Esophagus muscularis mucosa (tissue), 4 donors: ENCODE measurements at regions of chr1 and their contacts with region 1.

Region 1: GRCh38 chr1:17125756-17126237 is 6.5 kb upstream of the PADI2 start:
- DNase-seq: peak; percentile 95
- H3K4me3 ChIP-seq: peak overlapping the region in 1 of 4 donors; percentile 31
- H3K27ac ChIP-seq: no peak overlapping the region
- H3K4me1 ChIP-seq: peaks cover 9 to 15% (median 13%) of the 10 kb centered on the region in 4 donors
- H3K27me3 ChIP-seq: peaks cover 0 to 16% (median 0%) of the 10 kb centered on the region in 4 donors
- CTCF ChIP-seq: peak; percentile 91 to 98 (median 94)
- EP300 ChIP-seq: no peak
- POLR2A ChIP-seq: no peak

Region 2: GRCh38 chr1:17236779-17237560 is 111.2 kb after region 1 on chr1:
- intact Hi-C with region 1: loop called (anchors 1 kb)
- DNase-seq: peak; percentile 95
- H3K4me3 ChIP-seq: no peak overlapping the region
- H3K27ac ChIP-seq: no peak overlapping the region
- H3K4me1 ChIP-seq: peaks cover 0 to 6% (median 2%) of the 10 kb centered on the region in 4 donors
- H3K27me3 ChIP-seq: peaks cover 0 to 37% (median 0%) of the 10 kb centered on the region in 4 donors
- CTCF ChIP-seq: peak; percentile 78 to 94 (median 83)
- EP300 ChIP-seq: no peak
- POLR2A ChIP-seq: no peak

Region 3: DNA sequence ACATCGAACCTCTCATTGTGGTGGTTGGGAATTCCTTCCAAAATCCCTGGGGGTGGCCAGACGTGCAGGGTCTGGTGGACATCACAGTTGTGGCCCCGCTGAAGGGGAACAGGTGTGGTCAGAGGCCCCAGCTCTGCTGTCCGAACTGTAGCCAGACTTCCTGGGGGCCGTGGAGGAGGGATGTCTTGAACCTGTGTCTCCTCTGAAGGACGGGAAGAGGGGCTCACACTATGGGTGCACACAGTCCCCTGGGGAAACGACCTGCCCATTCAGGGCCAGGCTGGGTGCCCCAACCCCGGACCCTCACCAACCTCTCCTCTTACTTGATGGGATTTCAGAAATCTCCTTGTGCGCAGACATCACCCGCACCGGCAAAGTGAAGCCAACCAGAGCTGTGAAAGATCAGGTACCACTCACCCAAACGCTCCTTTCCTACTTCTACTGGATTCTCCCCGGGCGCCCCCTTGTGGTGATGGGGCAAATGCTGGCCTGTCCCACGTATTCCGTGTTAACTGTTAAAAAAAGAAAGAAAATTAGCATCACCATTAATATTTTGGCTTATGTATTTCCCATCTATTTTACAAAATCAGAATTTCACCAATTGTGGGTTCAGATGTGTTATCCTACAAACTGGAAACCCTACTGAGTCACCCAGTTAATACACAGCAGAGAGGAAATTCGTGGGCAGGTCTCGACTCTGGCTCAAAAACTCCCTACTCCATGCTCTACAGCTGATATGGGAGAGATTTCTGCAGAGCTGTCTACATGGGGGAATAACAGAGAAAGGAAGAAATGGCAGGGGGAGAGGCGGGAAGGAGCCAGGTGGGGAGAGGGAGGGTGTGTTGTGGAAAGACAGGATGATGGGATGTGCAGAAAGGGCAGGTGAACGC is 210.3 kb after region 1 on chr1:
- intact Hi-C with region 1: loop called (anchors 10 kb)
- DNase-seq: no peak
- H3K4me3 ChIP-seq: no peak overlapping the region
- H3K27ac ChIP-seq: no peak overlapping the region
- H3K4me1 ChIP-seq: no peaks in the 10 kb centered on the region
- H3K27me3 ChIP-seq: peaks cover 0 to 58% (median 3%) of the 10 kb centered on the region in 4 donors
- CTCF ChIP-seq: peak; percentile 40 to 66 (median 56)
- EP300 ChIP-seq: no peak
- POLR2A ChIP-seq: no peak

Region 4: GRCh38 chr1:17596651-17597509 is 471.1 kb after region 1 on chr1:
- intact Hi-C with region 1: no loop called
- DNase-seq: no peak
- H3K4me3 ChIP-seq: no peak overlapping the region
- H3K27ac ChIP-seq: peak overlapping the region; percentile 48 to 64 (median 54)
- H3K4me1 ChIP-seq: peaks cover 45 to 94% (median 68%) of the 10 kb centered on the region in 4 donors
- H3K27me3 ChIP-seq: no peaks in the 10 kb centered on the region
- CTCF ChIP-seq: no peak
- EP300 ChIP-seq: no peak
- POLR2A ChIP-seq: no peak